T-cell (primary cell): ENCODE measurements at regions of chr4 and their contacts with region 1.

Region 1: DNA sequence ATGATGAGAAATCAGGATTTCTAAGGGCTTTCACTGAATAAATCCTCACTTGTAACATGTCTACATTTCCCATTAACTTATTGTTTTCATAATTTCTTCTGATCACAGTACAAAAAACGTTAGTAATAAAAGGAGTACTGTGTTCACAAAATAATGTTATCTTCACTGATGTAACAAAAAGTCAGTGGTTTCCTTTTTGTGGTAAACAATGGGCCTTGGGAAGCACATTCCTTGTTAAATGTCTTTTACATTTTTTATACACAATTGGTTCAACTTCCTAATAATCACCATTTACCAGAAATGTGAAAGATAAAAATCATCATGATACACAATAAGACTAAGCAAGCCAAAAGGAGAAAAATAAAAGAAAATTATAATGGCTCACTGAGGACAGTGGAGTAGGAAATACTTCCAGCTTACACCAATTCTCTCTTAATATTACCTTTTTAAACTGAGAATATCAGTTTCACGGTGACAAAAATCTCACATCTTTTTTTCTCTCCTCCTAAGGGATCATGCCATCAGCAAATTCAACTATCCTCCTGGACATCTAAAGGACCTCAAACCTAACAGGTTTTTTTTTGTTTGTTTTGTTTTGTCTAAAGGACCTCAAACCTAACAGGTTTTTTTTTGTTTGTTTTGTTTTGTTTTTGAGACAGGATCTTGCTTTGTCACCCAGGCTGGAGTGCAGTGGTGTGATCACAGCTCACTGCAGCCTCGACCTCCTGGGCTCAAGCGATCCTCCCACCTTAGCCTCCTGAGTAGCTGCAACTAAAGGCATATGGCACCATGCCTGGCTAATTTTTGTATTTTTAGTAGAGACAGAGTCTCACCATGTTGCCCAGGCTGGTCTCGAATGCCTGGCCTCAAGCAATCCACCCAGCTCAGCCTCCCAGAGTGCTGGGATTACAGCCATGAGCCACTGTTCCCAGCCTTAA is 57.3 kb downstream of the FRYL start:
- DNase-seq: no peak
- ATAC-seq: no peak
- H3K4me3 ChIP-seq: no peak overlapping the region
- H3K4me3 Mint-ChIP-seq: no peak overlapping the region
- H3K27ac ChIP-seq: no peak overlapping the region
- H3K27ac Mint-ChIP-seq: peak overlapping the region in 1 of 2 donors; percentile 18
- H3K4me1 ChIP-seq: peaks cover 7 to 8% of the 10 kb centered on the region in 2 experiments
- H3K4me1 Mint-ChIP-seq: peaks cover 73 to 78% (median 77%) of the 10 kb centered on the region in 3 donors
- H3K27me3 ChIP-seq: no peaks in the 10 kb centered on the region
- H3K27me3 Mint-ChIP-seq: no peaks in the 10 kb centered on the region

Region 2: DNA sequence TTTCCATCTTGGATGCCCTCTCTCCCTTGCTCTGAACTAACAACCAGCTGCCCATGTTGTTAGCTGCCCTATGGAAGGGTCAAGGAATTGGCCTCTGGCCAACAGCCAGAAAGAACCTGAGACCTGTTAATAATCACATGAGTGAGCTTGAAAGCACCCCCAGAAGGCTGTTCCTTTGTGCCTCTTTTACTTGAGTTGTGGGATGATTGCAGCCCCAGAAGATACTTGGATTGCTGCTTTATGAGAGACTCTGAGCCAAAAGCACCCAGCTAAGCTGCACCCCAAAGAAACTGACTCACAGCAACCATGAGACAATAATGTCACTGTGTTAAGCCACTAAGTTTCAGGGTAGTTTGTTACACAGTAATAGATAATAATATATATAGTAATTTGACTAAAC is 16.0 kb before region 1 on chr4:
- CTCF ChIA-PET with region 1: no interaction called
- POLR2A ChIA-PET with region 1: no interaction called
- DNase-seq: no peak
- ATAC-seq: no peak
- H3K4me3 ChIP-seq: no peak overlapping the region
- H3K4me3 Mint-ChIP-seq: no peak overlapping the region
- H3K27ac ChIP-seq: no peak overlapping the region
- H3K27ac Mint-ChIP-seq: no peak overlapping the region
- H3K4me1 ChIP-seq: no peaks in the 10 kb centered on the region
- H3K4me1 Mint-ChIP-seq: peaks cover 28 to 35% (median 34%) of the 10 kb centered on the region in 3 donors
- H3K27me3 ChIP-seq: no peaks in the 10 kb centered on the region
- H3K27me3 Mint-ChIP-seq: no peaks in the 10 kb centered on the region

Region 3: GRCh38 chr4:48739560-48740019 is 16.8 kb after region 1 on chr4:
- CTCF ChIA-PET with region 1: no interaction called
- POLR2A ChIA-PET with region 1: interaction called in 1 of 2 experiments, 12 read pairs
- DNase-seq: no peak
- ATAC-seq: peak in 2 of 4 experiments; percentile 26 to 36
- H3K4me3 ChIP-seq: no peak overlapping the region
- H3K4me3 Mint-ChIP-seq: peak overlapping the region in 2 of 3 donors; percentile 4
- H3K27ac ChIP-seq: no peak overlapping the region
- H3K27ac Mint-ChIP-seq: peak overlapping the region; percentile 49 to 64
- H3K4me1 ChIP-seq: peaks cover 24 to 27% of the 10 kb centered on the region in 2 experiments
- H3K4me1 Mint-ChIP-seq: peaks cover 76 to 86% (median 86%) of the 10 kb centered on the region in 3 donors
- H3K27me3 ChIP-seq: no peaks in the 10 kb centered on the region
- H3K27me3 Mint-ChIP-seq: no peaks in the 10 kb centered on the region